Activated CD4-positive, alpha-beta memory T cell treated with anti-CD3 and anti-CD28 coated beads for 36 hours (primary cell): ENCODE measurements at regions of chr22 and their contacts with region 1.

Region 1: DNA sequence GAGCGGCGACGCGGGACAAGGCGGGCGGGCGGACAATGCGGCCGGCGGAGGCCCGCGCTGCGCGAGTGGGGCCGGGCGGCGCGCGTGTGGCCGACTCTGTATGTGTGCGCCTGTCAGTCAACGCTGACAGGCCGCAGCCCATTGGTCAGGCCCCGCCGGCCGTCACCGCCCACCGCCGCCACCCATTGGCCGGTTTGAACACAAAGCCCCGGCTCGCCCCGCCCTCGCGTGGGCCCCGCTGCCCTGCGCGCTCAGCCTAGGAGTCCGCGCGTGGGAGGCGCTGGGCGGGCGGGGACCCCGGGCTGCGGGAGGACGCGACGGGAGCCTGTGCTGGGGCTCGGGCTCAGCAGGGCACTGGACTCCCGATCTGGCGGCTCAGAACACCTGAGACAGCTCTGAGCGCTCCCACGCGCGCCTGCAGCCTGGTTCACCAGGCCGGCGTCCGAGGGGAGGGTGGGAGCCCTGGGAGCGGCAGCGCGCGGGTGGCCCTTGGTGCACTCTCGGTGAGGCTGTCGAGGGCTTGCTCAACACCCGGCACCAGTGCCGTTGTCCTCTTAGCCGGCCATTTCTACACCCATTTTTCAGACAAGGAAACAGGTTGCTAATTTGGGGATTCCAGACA is at the start of gene SUN2:
- DNase-seq: peak; percentile 95
- H3K4me3 Mint-ChIP-seq: peak within 1 kb of the TSS; percentile 88
- H3K27ac Mint-ChIP-seq: peak within 1 kb of the TSS; percentile 93
- H3K4me1 Mint-ChIP-seq: peaks cover 55% of the 10 kb centered on the region
- H3K27me3 Mint-ChIP-seq: no peaks in the 10 kb centered on the region
- total RNA-seq, gene SUN2: 159 to 168 TPM

Region 2: DNA sequence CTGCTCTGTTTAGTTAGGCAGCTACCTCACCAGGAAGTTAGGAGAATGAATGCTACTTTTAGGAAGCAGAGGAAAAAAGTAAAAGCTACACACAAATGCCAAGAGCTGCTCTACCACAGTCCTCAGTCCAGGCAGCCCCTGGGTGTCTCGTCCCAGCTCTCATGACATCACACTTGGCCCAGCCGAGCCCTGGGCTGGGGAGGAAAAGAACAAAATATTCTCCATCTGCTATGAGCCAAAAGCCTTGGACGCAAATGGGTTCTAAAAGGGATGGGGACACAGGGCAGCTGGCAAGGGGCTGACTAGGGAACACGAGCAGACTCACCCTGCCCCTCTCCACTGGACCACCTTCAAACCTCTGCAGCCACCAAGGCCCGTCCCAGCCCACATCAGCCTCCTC is 509.3 kb before region 1 on chr22:
- CTCF ChIA-PET with region 1: no interaction called
- POLR2A ChIA-PET with region 1: no interaction called
- intact Hi-C with region 1: no loop called
- DNase-seq: no peak
- H3K4me3 Mint-ChIP-seq: no peak overlapping the region
- H3K27ac Mint-ChIP-seq: no peak overlapping the region
- H3K4me1 Mint-ChIP-seq: no peaks in the 10 kb centered on the region
- H3K27me3 Mint-ChIP-seq: no peaks in the 10 kb centered on the region

Region 3: GRCh38 chr22:38601221-38601764 is 154.7 kb before region 1 on chr22:
- CTCF ChIA-PET with region 1: no interaction called
- POLR2A ChIA-PET with region 1: no interaction called
- intact Hi-C with region 1: no loop called
- DNase-seq: peak; percentile 10
- H3K4me3 Mint-ChIP-seq: no peak overlapping the region
- H3K27ac Mint-ChIP-seq: no peak overlapping the region
- H3K4me1 Mint-ChIP-seq: no peaks in the 10 kb centered on the region
- H3K27me3 Mint-ChIP-seq: peaks cover 2% of the 10 kb centered on the region

Region 4: DNA sequence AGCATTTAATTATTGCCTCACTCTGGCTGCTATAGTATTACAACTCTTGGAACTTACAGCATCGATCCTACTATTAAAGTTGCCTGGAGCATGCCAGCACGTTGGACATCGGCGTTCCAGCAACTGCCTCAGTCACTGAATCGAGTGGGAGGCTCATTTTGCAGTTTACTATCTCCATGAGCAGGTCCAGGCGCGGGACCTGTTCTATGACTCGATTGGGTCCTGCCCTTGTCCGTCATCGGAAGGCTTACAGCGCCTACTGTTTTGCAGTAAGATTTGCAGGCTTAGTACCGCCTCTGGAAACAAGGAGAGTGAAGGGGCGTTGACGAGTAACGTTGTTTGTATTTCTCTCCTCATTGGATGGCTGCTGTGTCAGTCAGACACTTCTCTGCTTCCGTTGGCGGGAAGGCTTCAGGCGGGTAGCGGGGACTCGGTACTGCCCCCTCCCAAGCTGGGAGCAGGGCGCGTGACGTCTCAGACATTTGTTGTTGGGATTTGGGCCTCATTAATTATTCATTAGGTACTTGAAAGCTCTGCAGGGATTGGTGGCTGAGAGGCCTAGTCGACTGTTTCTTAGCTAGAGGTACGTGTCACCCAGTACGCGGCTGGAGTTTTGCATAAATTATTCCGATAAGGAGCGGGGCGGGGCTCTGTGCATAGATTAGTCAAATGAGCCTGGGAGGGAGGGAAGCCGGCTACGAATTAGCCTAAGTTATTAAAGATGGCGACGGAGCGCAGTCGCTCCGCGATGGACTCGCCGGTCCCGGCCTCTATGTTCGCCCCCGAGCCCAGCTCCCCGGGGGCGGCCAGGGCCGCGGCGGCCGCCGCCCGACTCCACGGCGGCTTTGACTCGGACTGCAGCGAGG is 50.6 kb before region 1 on chr22 and contains the start of gene GTPBP1:
- CTCF ChIA-PET with region 1: interaction called, 3 read pairs
- POLR2A ChIA-PET with region 1: interaction called, 7 read pairs
- intact Hi-C with region 1: loop called (anchors 1 kb)
- DNase-seq: peak; percentile 98
- H3K4me3 Mint-ChIP-seq: peak within 1 kb of the TSS; percentile 92
- H3K27ac Mint-ChIP-seq: peak within 1 kb of the TSS; percentile 97
- H3K4me1 Mint-ChIP-seq: peaks cover 47% of the 10 kb centered on the region
- H3K27me3 Mint-ChIP-seq: peaks cover 1% of the 10 kb centered on the region
- total RNA-seq, gene GTPBP1: 95.4 to 98.1 TPM

Region 5: DNA sequence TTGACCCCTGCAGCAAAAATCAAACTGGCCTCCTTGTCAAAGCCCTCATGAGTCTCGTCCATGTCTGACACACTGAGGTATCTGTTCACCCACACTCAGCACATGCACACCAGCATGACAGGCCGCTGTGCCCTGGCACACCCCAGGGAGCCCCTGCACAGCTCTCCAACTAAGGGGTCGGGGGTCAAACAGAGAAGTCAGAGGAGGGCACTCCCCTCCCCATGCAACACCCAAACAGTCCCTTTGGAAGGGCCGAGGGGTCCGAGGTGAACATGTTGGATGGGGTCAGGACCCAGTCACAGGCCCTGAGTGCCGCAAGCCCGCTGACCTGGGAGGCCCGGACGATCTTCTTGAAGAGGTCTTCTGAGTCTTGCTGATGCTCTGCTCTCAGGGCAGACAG is 14.9 kb before region 1 on chr22:
- CTCF ChIA-PET with region 1: interaction called, 28 read pairs
- POLR2A ChIA-PET with region 1: interaction called, 17 read pairs
- intact Hi-C with region 1: loop called (anchors 2 kb)
- DNase-seq: no peak
- H3K4me3 Mint-ChIP-seq: no peak overlapping the region
- H3K27ac Mint-ChIP-seq: peak overlapping the region; percentile 51
- H3K4me1 Mint-ChIP-seq: peaks cover 26% of the 10 kb centered on the region
- H3K27me3 Mint-ChIP-seq: no peaks in the 10 kb centered on the region

Region 6: DNA sequence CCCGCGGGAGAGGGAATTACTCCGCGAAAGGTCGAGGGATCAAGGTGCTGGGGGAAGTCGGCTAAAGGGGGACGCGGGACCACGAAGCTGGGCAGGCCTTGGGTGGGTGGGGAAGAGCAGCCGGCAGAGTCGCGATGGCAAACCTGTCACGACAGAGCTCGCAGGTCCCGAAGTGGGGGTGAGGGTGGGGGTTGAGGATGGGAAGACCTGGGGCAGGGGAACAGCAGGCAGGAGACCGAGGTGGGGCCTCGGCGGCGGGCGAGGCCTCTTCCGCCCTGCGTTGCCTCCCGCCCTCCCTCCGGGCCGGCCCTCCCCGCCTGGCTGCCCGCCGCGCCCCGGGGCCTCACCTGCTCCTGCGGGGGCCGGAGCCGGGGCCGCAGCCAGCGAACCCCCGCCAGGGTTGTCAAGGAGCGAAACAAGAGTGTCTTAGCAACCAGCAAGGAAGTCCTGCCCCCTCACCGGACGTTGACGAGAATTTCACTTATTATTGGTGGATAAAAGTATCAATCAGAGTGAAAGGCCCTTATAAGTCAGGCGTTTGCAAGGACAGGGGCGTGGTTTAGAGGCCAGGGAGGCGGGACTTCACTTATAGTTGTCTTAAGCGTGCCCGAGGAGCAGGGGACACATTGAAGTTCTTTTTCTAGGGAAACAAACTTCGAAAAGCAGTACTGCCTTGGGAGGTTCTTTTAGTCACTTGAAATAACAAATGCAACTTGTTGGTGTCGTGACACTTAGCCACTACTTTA is 37.9 kb after region 1 on chr22 and contains the start of gene DNAL4:
- CTCF ChIA-PET with region 1: no interaction called
- POLR2A ChIA-PET with region 1: interaction called, 3 read pairs
- intact Hi-C with region 1: loop called (anchors 2 kb)
- DNase-seq: peak; percentile 95
- H3K4me3 Mint-ChIP-seq: peak within 1 kb of the TSS; percentile 79
- H3K27ac Mint-ChIP-seq: peak within 1 kb of the TSS; percentile 61
- H3K4me1 Mint-ChIP-seq: peaks cover 14% of the 10 kb centered on the region
- H3K27me3 Mint-ChIP-seq: peaks cover 23% of the 10 kb centered on the region
- total RNA-seq, gene DNAL4: 7.7 to 8.3 TPM

Region 7: DNA sequence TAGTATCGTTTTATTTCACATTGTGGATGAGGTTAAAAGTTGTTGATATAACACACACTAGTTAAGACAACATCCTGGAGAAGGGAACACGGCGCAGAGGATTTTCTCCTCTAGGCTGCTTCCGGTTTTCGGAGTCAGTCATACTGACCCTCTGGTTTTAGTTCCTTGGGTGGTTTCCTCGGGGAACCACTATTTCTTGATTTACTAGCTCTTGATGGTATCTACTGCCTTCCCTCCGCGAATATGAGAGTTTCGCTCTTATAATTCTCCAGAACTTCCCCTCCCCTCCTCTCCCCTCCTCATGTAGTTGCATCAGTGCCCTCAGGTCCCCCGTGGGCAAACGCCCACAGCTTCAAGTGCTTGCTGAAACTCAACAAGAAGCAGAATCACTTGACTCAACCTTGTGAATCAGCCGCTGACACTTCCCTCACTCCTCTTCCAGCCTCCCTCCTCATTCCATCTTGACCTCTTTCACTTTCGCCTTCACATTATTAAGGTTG is 185.5 kb after region 1 on chr22:
- CTCF ChIA-PET with region 1: no interaction called
- POLR2A ChIA-PET with region 1: no interaction called
- intact Hi-C with region 1: loop called (anchors 5 kb)
- DNase-seq: peak; percentile 89
- H3K4me3 Mint-ChIP-seq: peak overlapping the region; percentile 45
- H3K27ac Mint-ChIP-seq: peak overlapping the region; percentile 80
- H3K4me1 Mint-ChIP-seq: peaks cover 35% of the 10 kb centered on the region
- H3K27me3 Mint-ChIP-seq: peaks cover 28% of the 10 kb centered on the region

Region 8: GRCh38 chr22:39097098-39098020 is 341.3 kb after region 1 on chr22 and contains the start of gene APOBEC3H:
- CTCF ChIA-PET with region 1: no interaction called
- POLR2A ChIA-PET with region 1: interaction called, 4 read pairs
- intact Hi-C with region 1: loop called (anchors 10 kb)
- DNase-seq: peak; percentile 74
- H3K4me3 Mint-ChIP-seq: peak within 1 kb of the TSS; percentile 78
- H3K27ac Mint-ChIP-seq: peak within 1 kb of the TSS; percentile 91
- H3K4me1 Mint-ChIP-seq: peaks cover 78% of the 10 kb centered on the region
- H3K27me3 Mint-ChIP-seq: no peaks in the 10 kb centered on the region
- total RNA-seq, gene APOBEC3H: 23.6 to 25.3 TPM